GM12878 (cell line): ENCODE measurements at regions of chr3 and their contacts with region 1.

Region 1: GRCh38 chr3:122564155-122564912 is at the starts of genes DTX3L and PARP9:
- DNase-seq: no peak
- ATAC-seq: peak; percentile 82
- H3K4me3 ChIP-seq: peak within 1 kb of the TSS; percentile 57
- H3K27ac ChIP-seq: peak within 1 kb of the TSS; percentile 82
- H3K4me1 ChIP-seq: peaks cover 4% of the 10 kb centered on the region; the same call in 1 of the 2 replicates
- H3K27me3 ChIP-seq: no peaks in the 10 kb centered on the region
- CTCF ChIP-seq: no peak
- EP300 ChIP-seq: no peak
- POLR2A ChIP-seq: peak; percentile 83
- RAD21 ChIP-seq: no peak
- polyA plus RNA-seq, gene DTX3L: 9.9 to 14.6 TPM
- polyA plus RNA-seq, gene PARP9: 34.0 to 40.4 TPM

Region 2: GRCh38 chr3:121918779-121919483 is 645.4 kb before region 1 on chr3:
- CTCF ChIA-PET with region 1: no interaction called
- POLR2A ChIA-PET with region 1: no interaction called
- RAD21 ChIA-PET with region 1: no interaction called
- SMC1A ChIA-PET with region 1: no interaction called
- in situ Hi-C with region 1: no loop called
- intact Hi-C with region 1: no loop called
- DNase-seq: no peak
- ATAC-seq: no peak
- H3K4me3 ChIP-seq: no peak overlapping the region
- H3K27ac ChIP-seq: no peak overlapping the region
- H3K4me1 ChIP-seq: no peaks in the 10 kb centered on the region
- H3K27me3 ChIP-seq: no peaks in the 10 kb centered on the region
- CTCF ChIP-seq: no peak
- EP300 ChIP-seq: no peak
- POLR2A ChIP-seq: no peak
- RAD21 ChIP-seq: no peak

Region 3: GRCh38 chr3:122392868-122393844 is 171.2 kb before region 1 on chr3:
- CTCF ChIA-PET with region 1: interaction called, 7 read pairs
- POLR2A ChIA-PET with region 1: interaction called, 3 read pairs
- RAD21 ChIA-PET with region 1: interaction called, 3 read pairs
- SMC1A ChIA-PET with region 1: interaction called, 12 read pairs
- in situ Hi-C with region 1: no loop called
- intact Hi-C with region 1: no loop called
- DNase-seq: no peak
- ATAC-seq: peak; percentile 59
- H3K4me3 ChIP-seq: no peak overlapping the region
- H3K27ac ChIP-seq: no peak overlapping the region
- H3K4me1 ChIP-seq: no peaks in the 10 kb centered on the region; the same call in 1 of the 2 replicates
- H3K27me3 ChIP-seq: no peaks in the 10 kb centered on the region
- CTCF ChIP-seq: peak; percentile 52 to 77 (median 75); a peak in 5 of 6 replicates
- EP300 ChIP-seq: no peak
- POLR2A ChIP-seq: no peak
- RAD21 ChIP-seq: peak; percentile 88

Region 4: GRCh38 chr3:122578069-122578740 is 13.9 kb after region 1 on chr3:
- CTCF ChIA-PET with region 1: interaction called, 59 read pairs
- POLR2A ChIA-PET with region 1: interaction called, 79 read pairs
- RAD21 ChIA-PET with region 1: interaction called, 149 read pairs
- SMC1A ChIA-PET with region 1: interaction called, 51 read pairs
- in situ Hi-C with region 1: no loop called
- intact Hi-C with region 1: loop called (anchors 1 kb)
- DNase-seq: no peak
- ATAC-seq: no peak
- H3K4me3 ChIP-seq: peak overlapping the region; percentile 54
- H3K27ac ChIP-seq: peak overlapping the region; percentile 95
- H3K4me1 ChIP-seq: peaks cover 24% of the 10 kb centered on the region
- H3K27me3 ChIP-seq: no peaks in the 10 kb centered on the region
- CTCF ChIP-seq: no peak
- EP300 ChIP-seq: no peak
- POLR2A ChIP-seq: no peak
- RAD21 ChIP-seq: no peak

Region 5: GRCh38 chr3:122621112-122621511 is 56.8 kb after region 1 on chr3:
- CTCF ChIA-PET with region 1: interaction called, 17 read pairs
- POLR2A ChIA-PET with region 1: interaction called, 5 read pairs
- RAD21 ChIA-PET with region 1: interaction called, 41 read pairs
- SMC1A ChIA-PET with region 1: interaction called, 71 read pairs
- in situ Hi-C with region 1: no loop called
- intact Hi-C with region 1: no loop called
- DNase-seq: peak; percentile 66
- ATAC-seq: peak; percentile 63
- H3K4me3 ChIP-seq: peak overlapping the region; percentile 39; the same call in 1 of the 2 replicates
- H3K27ac ChIP-seq: peak overlapping the region; percentile 47; the same call in 1 of the 2 replicates
- H3K4me1 ChIP-seq: peaks cover 24% of the 10 kb centered on the region
- H3K27me3 ChIP-seq: no peaks in the 10 kb centered on the region
- CTCF ChIP-seq: no peak
- EP300 ChIP-seq: peak; percentile 55 to 64; a peak in 2 of 4 replicates
- POLR2A ChIP-seq: no peak
- RAD21 ChIP-seq: no peak

Region 6: DNA sequence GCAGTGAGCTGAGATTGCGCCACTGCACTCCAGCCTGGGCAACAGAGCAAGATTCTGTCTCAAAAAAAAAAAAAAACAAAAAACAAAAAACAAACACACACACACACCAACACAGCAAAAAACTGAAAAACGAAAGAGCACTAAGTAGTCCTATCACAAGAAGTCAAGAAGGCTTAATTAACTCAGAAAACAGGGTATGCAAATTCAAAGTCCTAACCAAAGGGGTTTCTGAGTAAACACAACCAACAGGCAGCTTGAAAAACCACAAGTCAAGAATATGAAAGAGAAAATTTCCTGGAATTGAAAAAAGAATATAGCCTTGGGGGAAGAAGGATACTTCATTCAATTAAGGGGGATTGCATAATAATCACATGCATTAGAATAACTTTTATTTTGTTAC is 78.6 kb after region 1 on chr3:
- CTCF ChIA-PET with region 1: interaction called, 6 read pairs
- POLR2A ChIA-PET with region 1: interaction called, 5 read pairs
- RAD21 ChIA-PET with region 1: interaction called, 12 read pairs
- SMC1A ChIA-PET with region 1: interaction called, 7 read pairs
- in situ Hi-C with region 1: no loop called
- intact Hi-C with region 1: no loop called
- DNase-seq: peak; percentile 65
- ATAC-seq: peak; percentile 78
- H3K4me3 ChIP-seq: no peak overlapping the region
- H3K27ac ChIP-seq: no peak overlapping the region
- H3K4me1 ChIP-seq: peaks cover 22% of the 10 kb centered on the region
- H3K27me3 ChIP-seq: no peaks in the 10 kb centered on the region
- CTCF ChIP-seq: no peak
- EP300 ChIP-seq: peak; percentile 38 to 43; a peak in 2 of 4 replicates
- POLR2A ChIP-seq: no peak
- RAD21 ChIP-seq: no peak

Region 7: GRCh38 chr3:122793568-122794416 is 229.5 kb after region 1 on chr3 and contains the start of gene HSPBAP1:
- CTCF ChIA-PET with region 1: no interaction called
- POLR2A ChIA-PET with region 1: no interaction called
- RAD21 ChIA-PET with region 1: interaction called, 4 read pairs
- SMC1A ChIA-PET with region 1: no interaction called
- in situ Hi-C with region 1: no loop called
- intact Hi-C with region 1: loop called (anchors 10 kb)
- DNase-seq: peak; percentile 68
- ATAC-seq: peak; percentile 76
- H3K4me3 ChIP-seq: peak within 1 kb of the TSS; percentile 77
- H3K27ac ChIP-seq: peak within 1 kb of the TSS; percentile 47
- H3K4me1 ChIP-seq: no peaks in the 10 kb centered on the region
- H3K27me3 ChIP-seq: no peaks in the 10 kb centered on the region
- CTCF ChIP-seq: no peak
- EP300 ChIP-seq: peak in 1 of 2 experiments; percentile 44; a peak in 1 of 4 replicates
- POLR2A ChIP-seq: peak; percentile 83
- RAD21 ChIP-seq: no peak
- polyA plus RNA-seq, gene HSPBAP1: 3.2 to 3.5 TPM